BJ (cell line): ENCODE measurements at regions of chr2 and their contacts with region 1.

Region 1: DNA sequence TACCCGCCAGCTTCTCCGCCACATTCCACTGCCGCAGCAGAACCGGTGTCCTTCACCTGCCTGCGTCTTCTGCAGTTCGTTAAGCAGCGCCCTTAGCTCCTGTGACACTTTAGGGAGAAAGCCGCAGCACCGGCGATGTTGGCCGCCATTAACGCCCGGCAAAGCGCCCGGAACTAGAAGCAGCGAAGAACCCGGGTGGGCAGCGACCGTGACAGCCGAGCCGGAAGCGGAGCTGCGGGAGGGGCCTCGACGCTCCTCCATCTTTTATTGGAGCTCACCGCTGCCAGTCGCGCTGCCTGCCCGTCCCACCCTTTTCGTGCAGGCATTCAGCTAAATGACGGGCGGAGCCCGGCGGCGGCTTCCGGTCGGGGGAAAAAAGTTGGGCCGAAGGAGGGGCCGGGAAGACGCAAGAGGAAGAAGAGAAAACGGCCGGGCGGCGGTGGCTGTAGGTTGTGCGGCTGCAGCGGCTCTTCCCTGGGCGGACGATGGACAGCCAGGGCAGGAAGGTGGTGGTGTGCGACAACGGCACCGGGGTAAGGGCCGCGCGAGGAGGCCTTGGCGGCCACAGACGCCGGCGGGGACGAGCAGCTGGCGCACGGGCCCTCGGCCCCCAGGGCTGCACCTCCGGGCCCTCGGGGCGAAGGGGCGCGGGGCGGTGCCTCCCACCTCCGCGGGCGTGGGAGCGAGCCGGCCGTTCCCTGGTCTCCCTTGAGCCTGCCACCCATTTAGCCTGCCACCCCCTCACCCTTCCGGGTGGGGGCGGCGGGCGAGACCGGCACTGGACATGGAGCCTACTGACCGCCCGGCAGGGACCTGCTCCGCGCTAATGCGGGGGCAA is at the start of gene ACTR2:
- DNase-seq: peak; percentile 86
- H3K4me3 ChIP-seq: peak within 1 kb of the TSS; percentile 56
- H3K27me3 ChIP-seq: no peaks in the 10 kb centered on the region
- CTCF ChIP-seq: no peak
- polyA plus RNA-seq, gene ACTR2: 57.9 and 153 TPM in 2 replicates

Region 2: DNA sequence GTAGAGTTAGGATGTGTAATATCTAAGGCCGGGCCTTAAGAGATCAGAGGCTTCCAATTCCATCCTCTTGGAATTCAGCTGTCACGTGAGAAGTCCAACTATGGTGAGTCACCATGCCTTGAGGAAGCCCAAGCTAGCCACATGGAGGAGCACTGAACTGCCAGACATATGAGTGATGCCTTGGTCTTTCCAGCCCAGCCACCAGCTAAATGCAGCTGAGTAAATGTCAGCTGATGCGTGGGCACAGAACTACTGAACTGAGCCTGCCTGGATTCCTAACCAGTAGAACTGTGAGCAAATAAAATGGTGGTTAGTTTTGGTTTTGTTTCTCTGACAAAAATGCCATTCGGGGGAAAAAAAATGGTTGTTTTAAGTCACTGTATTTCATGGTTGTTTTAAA is 420.2 kb before region 1 on chr2:
- CTCF ChIA-PET with region 1: no interaction called
- POLR2A ChIA-PET with region 1: interaction called, 11 read pairs
- DNase-seq: peak; percentile 97
- H3K4me3 ChIP-seq: no peak overlapping the region
- H3K27me3 ChIP-seq: no peaks in the 10 kb centered on the region
- CTCF ChIP-seq: peak; percentile 18; the same call in 1 of the 2 replicates

Region 3: DNA sequence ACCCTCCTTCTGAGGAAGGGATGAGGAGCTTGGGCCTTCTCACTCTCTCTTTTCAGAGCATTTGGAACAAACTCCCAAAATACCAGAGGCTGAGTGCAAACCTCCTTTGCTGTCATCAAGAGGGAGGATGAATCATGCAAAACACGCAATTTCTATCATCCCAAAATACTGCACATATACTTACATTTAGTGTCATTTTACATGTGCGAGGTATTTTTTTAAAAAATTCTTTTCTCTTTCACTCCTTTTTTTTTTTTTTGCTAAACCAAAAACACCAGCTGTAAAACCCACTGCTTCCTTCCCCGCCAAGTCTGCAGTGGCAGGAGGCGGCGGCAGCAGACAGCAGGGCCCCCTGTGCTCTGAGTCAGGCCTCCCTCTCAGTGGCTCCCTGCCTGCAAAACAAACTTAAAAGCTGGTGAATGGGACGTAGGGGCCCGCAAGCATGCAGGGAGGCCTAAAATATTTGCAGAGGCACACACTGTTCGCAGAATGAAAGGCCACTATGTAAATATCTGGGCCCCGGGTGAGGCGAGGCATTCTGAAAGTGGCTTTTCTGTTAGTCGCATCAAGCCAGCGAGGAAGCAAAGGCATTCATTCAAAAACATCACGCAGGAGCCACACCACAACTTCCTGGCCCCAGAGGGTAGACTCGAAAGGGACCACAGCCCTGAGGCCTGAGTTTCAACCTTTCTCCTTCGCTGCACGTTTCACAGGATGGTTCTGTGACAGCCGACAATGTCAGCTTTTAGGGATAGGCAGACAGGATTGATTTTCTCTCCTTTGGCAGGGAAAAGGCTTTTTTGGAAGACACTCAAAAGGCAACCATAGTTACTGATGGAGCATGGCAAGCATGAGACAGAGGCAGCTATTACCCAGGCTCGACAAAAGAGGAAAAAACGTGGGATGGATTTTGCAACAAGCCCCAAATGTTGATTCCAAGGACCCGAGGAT is 73.4 kb after region 1 on chr2:
- CTCF ChIA-PET with region 1: no interaction called
- POLR2A ChIA-PET with region 1: interaction called, 12 read pairs
- DNase-seq: peak; percentile 83
- H3K4me3 ChIP-seq: 0 out of 2 replicates have a peak overlapping the region, but pooled peaks have one; percentile 5
- H3K27me3 ChIP-seq: no peaks in the 10 kb centered on the region
- CTCF ChIP-seq: peak; percentile 7; the same call in 1 of the 2 replicates

Region 4: GRCh38 chr2:65386344-65386743 is 158.7 kb after region 1 on chr2:
- CTCF ChIA-PET with region 1: no interaction called
- POLR2A ChIA-PET with region 1: interaction called, 14 read pairs
- DNase-seq: no peak
- H3K4me3 ChIP-seq: no peak overlapping the region
- H3K27me3 ChIP-seq: no peaks in the 10 kb centered on the region
- CTCF ChIP-seq: no peak

Region 5: DNA sequence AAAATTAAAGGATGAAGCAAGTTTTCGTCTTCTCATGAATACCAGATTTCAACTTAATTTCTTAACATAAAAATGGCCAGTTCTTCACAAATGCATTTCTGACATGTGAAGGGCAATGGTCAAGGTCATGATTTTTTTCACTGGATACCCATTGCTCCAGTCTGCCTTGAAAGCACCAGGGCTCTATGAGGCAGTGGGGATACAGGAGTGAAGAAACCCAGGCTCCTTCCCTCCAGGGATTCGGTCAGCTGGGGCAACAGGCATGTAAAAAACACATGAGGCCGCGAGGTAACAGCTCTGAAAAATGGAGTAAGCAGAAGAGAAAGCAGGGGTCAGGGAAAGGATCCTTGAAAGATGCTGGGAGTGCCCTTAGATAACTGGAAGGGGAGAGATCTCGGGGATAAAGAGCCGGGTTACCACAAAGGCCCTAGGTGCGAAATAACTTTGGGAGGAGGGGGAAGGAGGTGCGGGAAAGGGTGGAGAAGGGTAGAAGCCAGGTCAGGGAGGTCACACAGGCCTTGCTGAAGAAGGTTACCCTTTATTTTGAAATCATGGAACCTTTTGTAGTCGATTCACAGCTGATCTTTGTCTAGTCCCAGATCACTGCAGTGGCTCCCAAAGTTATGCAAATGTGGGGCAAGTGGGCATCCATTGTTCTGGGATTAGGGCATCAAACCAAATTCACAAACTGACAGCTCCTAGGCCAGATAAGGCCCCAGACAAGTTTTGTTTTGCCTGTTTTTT is 209.9 kb after region 1 on chr2:
- CTCF ChIA-PET with region 1: no interaction called
- POLR2A ChIA-PET with region 1: interaction called, 22 read pairs
- DNase-seq: no peak
- H3K4me3 ChIP-seq: no peak overlapping the region; the same call in 1 of the 2 replicates
- H3K27me3 ChIP-seq: no peaks in the 10 kb centered on the region
- CTCF ChIP-seq: no peak